ENCODE measurements at regions of chr4 and their contacts with region 1.

Region 1: DNA sequence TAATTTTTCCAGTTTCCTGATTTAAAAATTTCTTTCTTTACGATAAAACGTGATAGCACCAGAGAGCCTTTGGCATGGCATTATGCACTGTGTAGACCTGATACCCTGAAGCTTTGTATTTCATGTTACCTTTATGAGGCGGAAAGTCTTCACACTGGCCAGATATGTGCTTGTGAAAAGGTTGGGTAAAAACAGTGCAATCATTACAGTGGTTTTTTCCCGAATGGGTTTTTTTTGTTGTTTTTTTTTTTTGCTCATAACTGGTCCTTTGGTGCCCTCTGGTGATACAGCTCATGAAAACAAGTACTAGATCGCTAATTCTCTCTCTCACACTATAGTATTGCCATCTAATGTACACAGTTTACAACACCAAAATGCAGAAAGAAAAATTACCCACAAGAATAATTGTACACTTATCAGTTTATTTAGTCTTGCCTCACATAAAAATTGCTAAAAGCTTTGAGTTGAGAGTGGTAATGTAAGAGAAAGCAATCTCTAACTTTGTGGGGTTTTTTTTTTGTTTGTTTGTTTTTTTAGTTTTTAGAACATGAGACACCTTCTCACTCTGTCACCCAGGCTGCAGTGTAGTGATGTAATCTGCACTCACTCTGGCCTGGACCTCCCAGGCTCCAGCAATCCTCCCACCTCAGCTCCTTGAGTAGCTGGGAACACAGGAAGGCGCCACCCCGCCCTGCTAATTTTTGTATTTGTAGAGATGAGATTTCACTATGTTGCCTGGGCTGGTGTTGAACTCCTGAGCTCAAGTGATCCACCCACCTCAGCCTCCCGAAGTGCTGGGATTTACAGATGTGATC is 21.3 kb downstream of the SPCS3 start:
- DNase-seq: no peak
- H3K4me3 ChIP-seq: no peak overlapping the region
- H3K27ac ChIP-seq: no peak overlapping the region
- H3K4me1 ChIP-seq: no peaks in the 10 kb centered on the region
- H3K27me3 ChIP-seq: no peaks in the 10 kb centered on the region
- CTCF ChIP-seq: peak; percentile 47

Region 2: DNA sequence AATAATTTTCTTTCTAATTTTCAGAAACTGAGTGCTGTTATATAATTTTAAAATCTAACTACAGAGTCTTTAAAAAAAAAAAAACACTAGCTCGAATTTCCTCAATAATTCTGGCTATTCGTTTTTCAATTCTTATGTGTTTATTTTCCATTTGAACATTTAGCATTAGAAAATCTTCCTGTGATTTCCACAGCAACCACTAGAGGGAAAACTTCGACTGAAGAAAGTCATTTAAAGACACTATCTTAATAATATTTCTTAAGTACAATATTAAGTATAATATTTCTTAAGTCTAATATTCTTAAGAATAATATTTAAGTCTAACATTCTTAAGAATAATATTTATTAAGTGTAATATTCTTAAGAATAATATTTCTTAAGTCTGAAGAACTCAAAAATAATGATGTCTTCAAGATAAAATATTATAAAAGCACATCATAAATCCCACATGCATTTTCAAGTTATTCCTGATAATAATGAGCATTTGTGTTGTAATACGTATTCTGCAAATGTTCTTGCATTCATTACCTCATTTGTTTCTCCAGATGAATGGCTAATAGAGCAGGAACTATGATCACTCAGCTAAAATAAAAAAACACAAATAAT is 393.9 kb before region 1 on chr4:
- intact Hi-C with region 1: loop called (anchors 10 kb)
- DNase-seq: no peak
- H3K4me3 ChIP-seq: no peak overlapping the region
- H3K27ac ChIP-seq: no peak overlapping the region
- H3K4me1 ChIP-seq: no peaks in the 10 kb centered on the region
- H3K27me3 ChIP-seq: no peaks in the 10 kb centered on the region
- CTCF ChIP-seq: peak; percentile 52

Region 3: DNA sequence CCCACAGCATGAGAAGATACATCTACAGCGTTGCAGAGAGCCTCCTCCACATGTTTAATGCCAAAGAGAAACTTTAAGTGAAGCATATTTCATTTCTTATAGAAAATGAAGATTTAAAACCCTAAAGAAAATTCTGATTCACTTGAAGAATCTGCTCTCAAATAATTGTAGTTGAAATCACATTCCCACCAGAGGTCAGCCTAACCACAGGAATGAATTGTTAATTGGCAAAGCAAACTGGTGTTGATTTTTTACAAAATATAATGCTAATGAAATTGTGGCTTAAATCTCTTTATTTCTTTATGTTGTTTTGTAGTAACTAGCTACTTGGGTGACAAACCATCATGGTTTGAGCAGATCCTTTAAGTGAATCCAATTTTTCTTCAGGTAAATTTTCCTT is 306.6 kb before region 1 on chr4:
- intact Hi-C with region 1: loop called (anchors 5 kb)
- DNase-seq: no peak
- H3K4me3 ChIP-seq: no peak overlapping the region
- H3K27ac ChIP-seq: no peak overlapping the region
- H3K4me1 ChIP-seq: no peaks in the 10 kb centered on the region
- H3K27me3 ChIP-seq: no peaks in the 10 kb centered on the region
- CTCF ChIP-seq: peak; percentile 24

Region 4: DNA sequence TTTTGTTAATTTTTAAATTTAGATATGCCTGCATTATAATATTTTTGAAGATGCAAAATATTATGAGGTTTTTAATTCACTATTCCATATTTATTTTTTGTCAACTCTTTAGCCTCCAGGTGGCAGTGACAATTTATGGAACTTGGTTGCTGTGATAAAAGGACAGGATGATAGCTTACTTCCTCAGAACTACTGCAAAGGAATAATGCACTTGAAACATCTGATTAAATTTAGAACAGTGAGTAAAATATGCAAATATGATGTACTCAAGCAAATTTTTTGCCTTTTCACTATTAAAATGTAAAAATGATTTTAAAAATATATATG is 190.8 kb before region 1 on chr4:
- intact Hi-C with region 1: loop called (anchors 5 kb)
- DNase-seq: no peak
- H3K4me3 ChIP-seq: no peak overlapping the region
- H3K27ac ChIP-seq: no peak overlapping the region
- H3K4me1 ChIP-seq: no peaks in the 10 kb centered on the region
- H3K27me3 ChIP-seq: no peaks in the 10 kb centered on the region
- CTCF ChIP-seq: no peak

Region 5: DNA sequence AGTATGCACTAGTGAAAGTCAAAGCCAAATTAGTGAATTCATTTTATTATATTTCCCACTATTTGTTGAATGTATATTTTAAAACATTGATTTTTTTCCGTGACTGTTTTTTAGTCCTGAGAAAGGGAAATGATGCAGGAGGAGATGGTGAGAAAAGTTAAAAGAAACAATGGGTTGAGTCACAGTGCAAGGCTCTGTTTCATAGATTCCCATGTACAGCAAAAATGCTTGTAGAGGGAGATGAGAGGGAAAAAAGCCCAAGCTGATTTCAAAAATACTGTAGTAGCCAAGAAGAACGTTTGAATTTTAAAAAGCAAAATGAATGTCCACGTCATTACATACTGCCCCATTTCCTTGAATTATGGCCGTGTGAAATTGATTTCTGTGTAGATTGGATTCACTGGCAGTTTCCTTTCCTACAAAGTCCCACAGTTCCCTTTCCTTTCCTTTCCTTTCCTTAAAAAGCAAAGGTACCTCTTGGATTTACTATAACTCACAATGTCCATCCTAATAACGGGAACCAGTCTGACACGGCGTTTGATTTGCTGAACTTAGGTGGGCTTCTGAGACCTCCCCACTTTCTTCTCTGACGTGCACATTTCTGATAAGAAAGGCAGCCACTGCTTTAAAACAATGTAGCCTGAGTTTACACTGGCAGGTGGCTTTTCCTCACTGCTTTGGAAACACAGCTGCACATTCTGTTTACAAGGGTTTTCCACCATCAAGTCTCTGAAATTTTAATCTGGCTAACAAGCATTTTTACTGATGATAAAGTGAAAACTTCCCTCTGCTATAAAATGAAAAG is 42.4 kb after region 1 on chr4:
- intact Hi-C with region 1: no loop called
- DNase-seq: no peak
- H3K4me3 ChIP-seq: no peak overlapping the region
- H3K27ac ChIP-seq: no peak overlapping the region
- H3K4me1 ChIP-seq: no peaks in the 10 kb centered on the region
- H3K27me3 ChIP-seq: no peaks in the 10 kb centered on the region
- CTCF ChIP-seq: no peak